CD8-positive, alpha-beta T cell (primary cell): ENCODE measurements at regions of chr16 and their contacts with region 1.

Region 1: GRCh38 chr16:67017810-67018488 is 11.0 kb upstream of the CBFB start:
- DNase-seq: peak; percentile 67 to 89 (median 85)
- ATAC-seq: peak; percentile 89
- H3K4me3 ChIP-seq: no peak overlapping the region
- H3K4me3 Mint-ChIP-seq: no peak overlapping the region
- H3K27ac ChIP-seq: no peak overlapping the region
- H3K27ac Mint-ChIP-seq: no peak overlapping the region
- H3K4me1 ChIP-seq: peaks cover 15% of the 10 kb centered on the region
- H3K4me1 Mint-ChIP-seq: no peaks in the 10 kb centered on the region
- H3K27me3 ChIP-seq: peaks cover 0 to 18% of the 10 kb centered on the region in 2 experiments
- H3K27me3 Mint-ChIP-seq: no peaks in the 10 kb centered on the region
- CTCF ChIP-seq: peak; percentile 63

Region 2: DNA sequence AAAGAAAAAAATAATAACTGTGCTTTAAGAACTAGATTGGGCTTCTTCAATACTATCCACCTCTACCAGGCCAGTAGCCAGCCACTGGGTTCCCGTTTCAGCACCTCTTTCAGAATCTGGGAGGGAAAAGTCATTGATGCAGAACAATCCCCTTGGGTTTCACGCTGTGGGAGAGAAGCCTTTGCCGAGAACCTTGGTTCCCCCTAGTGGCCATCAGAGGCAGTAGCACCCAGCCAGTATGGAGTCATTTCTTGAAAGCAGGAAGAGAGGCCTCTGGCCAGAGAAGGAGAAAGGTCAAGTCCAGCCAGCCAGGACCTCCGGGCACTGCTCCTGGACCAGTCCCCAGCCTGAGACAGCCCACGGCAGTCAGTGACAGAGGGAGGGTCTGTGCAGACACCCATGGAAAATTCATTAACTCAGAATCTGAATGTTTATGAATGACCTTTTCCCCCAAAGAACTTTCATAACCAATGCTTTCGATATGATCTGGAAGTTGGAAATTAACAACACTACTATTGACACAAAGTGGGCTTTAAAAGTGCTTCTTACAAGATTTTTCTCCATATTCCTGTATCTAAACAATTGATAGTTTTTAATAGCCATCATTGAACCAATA is 702.6 kb before region 1 on chr16:
- CTCF ChIA-PET with region 1: no interaction called
- POLR2A ChIA-PET with region 1: no interaction called
- intact Hi-C with region 1: no loop called
- DNase-seq: peak; percentile 4 to 69 (median 40)
- ATAC-seq: peak; percentile 66
- H3K4me3 ChIP-seq: no peak overlapping the region
- H3K4me3 Mint-ChIP-seq: no peak overlapping the region
- H3K27ac ChIP-seq: no peak overlapping the region
- H3K27ac Mint-ChIP-seq: no peak overlapping the region
- H3K4me1 ChIP-seq: no peaks in the 10 kb centered on the region
- H3K4me1 Mint-ChIP-seq: no peaks in the 10 kb centered on the region
- H3K27me3 ChIP-seq: no peaks in the 10 kb centered on the region
- H3K27me3 Mint-ChIP-seq: peaks cover 12% of the 10 kb centered on the region
- CTCF ChIP-seq: peak; percentile 89

Region 3: DNA sequence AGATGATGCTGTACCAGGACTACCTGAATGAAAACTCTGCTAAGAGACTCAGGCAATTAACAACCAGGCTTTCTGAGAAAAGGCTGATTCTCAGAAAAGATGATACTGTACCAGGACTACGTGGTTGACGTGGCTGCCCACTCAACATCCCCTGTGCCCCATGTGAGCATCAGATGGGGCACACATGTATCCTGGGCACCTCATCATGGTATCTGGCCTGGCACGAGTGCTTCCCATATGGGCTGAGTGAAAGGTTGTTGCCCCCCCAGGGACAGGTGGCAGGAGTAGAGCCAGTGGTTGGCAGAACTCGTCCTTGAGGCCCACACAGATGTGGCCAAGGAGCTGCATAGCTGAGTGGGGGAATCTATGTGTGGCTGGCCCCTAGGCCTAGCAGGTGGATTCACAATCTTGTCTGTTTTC is 33.0 kb before region 1 on chr16:
- CTCF ChIA-PET with region 1: no interaction called
- POLR2A ChIA-PET with region 1: no interaction called
- intact Hi-C with region 1: no loop called
- DNase-seq: peak in 1 of 9 experiments; percentile 16
- ATAC-seq: no peak
- H3K4me3 ChIP-seq: no peak overlapping the region
- H3K4me3 Mint-ChIP-seq: no peak overlapping the region
- H3K27ac ChIP-seq: peak overlapping the region in 1 of 2 experiments; percentile 71
- H3K27ac Mint-ChIP-seq: peak overlapping the region; percentile 25
- H3K4me1 ChIP-seq: peaks cover 15% of the 10 kb centered on the region
- H3K4me1 Mint-ChIP-seq: peaks cover 9% of the 10 kb centered on the region
- H3K27me3 ChIP-seq: no peaks in the 10 kb centered on the region
- H3K27me3 Mint-ChIP-seq: no peaks in the 10 kb centered on the region
- CTCF ChIP-seq: no peak

Region 4: DNA sequence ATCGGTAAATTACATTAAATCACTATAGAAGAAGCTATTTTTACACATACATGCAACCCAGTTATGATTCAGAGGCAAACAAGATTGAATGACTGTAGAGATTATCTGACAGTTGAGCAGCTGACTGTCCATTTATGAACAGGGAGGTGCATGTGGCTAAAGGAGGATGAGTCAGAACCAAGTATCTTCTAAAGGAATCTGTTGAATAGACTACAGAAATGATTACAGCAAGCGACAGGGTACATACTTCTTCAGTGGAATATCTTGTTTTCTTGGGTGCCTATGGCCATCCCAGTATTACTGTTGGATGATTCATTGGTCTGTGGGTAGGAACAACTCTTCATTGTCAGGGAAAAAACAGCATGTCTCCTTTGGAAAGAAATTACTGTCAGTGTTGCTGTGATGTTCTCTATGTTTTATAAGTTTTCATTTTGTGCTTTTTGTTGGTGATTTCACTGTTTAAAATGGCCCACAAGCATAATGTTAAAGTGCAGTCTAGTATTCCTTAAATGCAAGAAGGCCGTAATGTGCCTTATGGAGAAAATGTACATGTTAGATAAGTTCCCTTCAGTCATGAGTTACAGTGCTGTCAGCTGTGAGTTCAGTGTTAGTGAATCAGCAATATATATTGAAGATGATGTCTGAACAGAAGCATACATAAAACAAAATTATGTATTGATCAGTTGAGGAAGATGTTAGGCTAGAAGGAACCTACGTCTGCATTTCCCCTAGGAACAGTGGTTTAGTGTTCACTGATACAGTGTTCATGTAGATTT is 38.0 kb after region 1 on chr16:
- CTCF ChIA-PET with region 1: interaction called, 3 read pairs
- POLR2A ChIA-PET with region 1: interaction called, 3 read pairs
- intact Hi-C with region 1: loop called in 1 of 2 experiments (anchors 5 kb)
- DNase-seq: no peak
- ATAC-seq: no peak
- H3K4me3 ChIP-seq: no peak overlapping the region
- H3K4me3 Mint-ChIP-seq: no peak overlapping the region
- H3K27ac ChIP-seq: no peak overlapping the region
- H3K27ac Mint-ChIP-seq: peak overlapping the region; percentile 30
- H3K4me1 ChIP-seq: peaks cover 24% of the 10 kb centered on the region
- H3K4me1 Mint-ChIP-seq: peaks cover 45% of the 10 kb centered on the region
- H3K27me3 ChIP-seq: no peaks in the 10 kb centered on the region
- H3K27me3 Mint-ChIP-seq: no peaks in the 10 kb centered on the region
- CTCF ChIP-seq: no peak

Region 5: GRCh38 chr16:67104061-67104460 is 86.1 kb after region 1 on chr16:
- CTCF ChIA-PET with region 1: interaction called, 36 read pairs
- POLR2A ChIA-PET with region 1: interaction called, 5 read pairs
- intact Hi-C with region 1: loop called (anchors 1 kb)
- DNase-seq: peak in 2 of 9 experiments; percentile 9 to 10
- ATAC-seq: no peak
- H3K4me3 ChIP-seq: no peak overlapping the region
- H3K4me3 Mint-ChIP-seq: no peak overlapping the region
- H3K27ac ChIP-seq: no peak overlapping the region
- H3K27ac Mint-ChIP-seq: no peak overlapping the region
- H3K4me1 ChIP-seq: peaks cover 3% of the 10 kb centered on the region
- H3K4me1 Mint-ChIP-seq: no peaks in the 10 kb centered on the region
- H3K27me3 ChIP-seq: no peaks in the 10 kb centered on the region
- H3K27me3 Mint-ChIP-seq: no peaks in the 10 kb centered on the region
- CTCF ChIP-seq: no peak